ENCODE measurements at regions of chr14 and their contacts with region 1.

Region 1: GRCh38 chr14:59132796-59133494 is 55.5 kb upstream of the DAAM1 start:
- DNase-seq: no peak
- H3K4me3 ChIP-seq: no peak overlapping the region
- H3K27ac ChIP-seq: no peak overlapping the region
- H3K4me1 ChIP-seq: no peaks in the 10 kb centered on the region
- H3K27me3 ChIP-seq: no peaks in the 10 kb centered on the region
- CTCF ChIP-seq: no peak
- EP300 ChIP-seq: no peak
- POLR2A ChIP-seq: no peak

Region 2: GRCh38 chr14:58844544-58844943 is 288.4 kb before region 1 on chr14:
- intact Hi-C with region 1: no loop called
- DNase-seq: no peak
- H3K4me3 ChIP-seq: no peak overlapping the region
- H3K27ac ChIP-seq: no peak overlapping the region
- H3K4me1 ChIP-seq: peaks cover 3% of the 10 kb centered on the region
- H3K27me3 ChIP-seq: no peaks in the 10 kb centered on the region
- CTCF ChIP-seq: no peak
- EP300 ChIP-seq: no peak
- POLR2A ChIP-seq: no peak

Region 3: DNA sequence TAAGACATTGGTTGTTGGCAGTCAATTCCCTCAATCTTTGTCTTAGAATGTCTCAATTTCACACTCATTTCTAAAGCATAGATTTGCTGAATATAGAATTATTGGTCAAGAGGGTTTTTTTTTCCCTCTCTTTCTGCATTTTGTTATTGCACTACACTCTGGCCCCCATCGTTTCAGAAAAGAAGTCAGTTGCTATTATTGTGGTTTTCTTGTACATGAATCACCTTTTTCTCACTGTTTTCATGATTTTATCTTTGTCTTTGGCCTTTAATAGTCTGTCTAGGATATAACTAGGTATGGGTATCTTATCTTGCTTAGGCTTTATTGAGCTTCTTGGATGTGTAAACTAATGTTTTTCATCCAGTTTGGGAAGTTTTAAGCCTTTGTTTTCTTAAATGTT is 138.8 kb before region 1 on chr14:
- intact Hi-C with region 1: no loop called
- DNase-seq: no peak
- H3K4me3 ChIP-seq: no peak overlapping the region
- H3K27ac ChIP-seq: no peak overlapping the region
- H3K4me1 ChIP-seq: no peaks in the 10 kb centered on the region
- H3K27me3 ChIP-seq: no peaks in the 10 kb centered on the region
- CTCF ChIP-seq: no peak
- EP300 ChIP-seq: no peak
- POLR2A ChIP-seq: no peak

Region 4: DNA sequence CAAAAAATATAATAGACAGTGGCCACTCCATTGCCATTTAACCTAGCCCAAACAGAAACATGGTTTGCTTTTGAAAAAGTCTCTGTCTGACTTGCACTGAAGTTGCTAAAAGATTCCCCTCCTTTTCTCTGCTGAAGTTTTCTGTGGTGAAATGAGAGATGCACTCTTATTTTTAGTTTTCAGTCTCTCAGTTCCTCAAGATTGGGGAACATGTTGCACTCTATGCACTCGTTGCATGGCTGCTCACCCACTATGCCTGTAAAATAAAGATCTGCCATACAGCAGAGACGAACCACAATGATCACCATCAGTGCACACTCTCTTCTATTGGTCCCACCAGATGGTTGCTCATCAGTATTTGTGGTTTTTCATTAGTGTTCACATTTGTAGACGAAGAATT is 42.5 kb after region 1 on chr14:
- intact Hi-C with region 1: no loop called
- DNase-seq: no peak
- H3K4me3 ChIP-seq: no peak overlapping the region
- H3K27ac ChIP-seq: no peak overlapping the region
- H3K4me1 ChIP-seq: no peaks in the 10 kb centered on the region
- H3K27me3 ChIP-seq: no peaks in the 10 kb centered on the region
- CTCF ChIP-seq: no peak
- EP300 ChIP-seq: no peak
- POLR2A ChIP-seq: no peak

Region 5: DNA sequence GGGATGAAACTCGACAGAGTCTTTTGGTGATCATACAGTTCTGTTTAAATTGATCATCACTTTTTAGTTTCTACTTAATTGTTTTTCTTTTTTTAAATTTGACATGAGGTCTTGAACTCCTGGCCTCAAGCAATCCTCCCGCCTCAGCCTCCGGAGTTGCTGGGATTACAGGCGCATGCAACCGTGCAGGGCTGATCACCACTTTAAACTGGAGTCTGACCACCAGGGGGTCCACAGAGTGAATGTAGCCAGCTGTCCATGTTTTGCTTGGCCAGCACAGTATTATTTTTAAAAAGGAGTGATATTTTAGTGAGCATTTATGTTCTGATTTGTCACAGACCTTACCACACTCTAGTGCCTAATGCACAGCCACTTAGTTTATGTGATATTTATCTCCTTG is 66.3 kb after region 1 on chr14:
- intact Hi-C with region 1: loop called in 1 of 4 experiments (anchors 5 kb)
- DNase-seq: no peak
- H3K4me3 ChIP-seq: no peak overlapping the region
- H3K27ac ChIP-seq: no peak overlapping the region
- H3K4me1 ChIP-seq: peaks cover 21% of the 10 kb centered on the region
- H3K27me3 ChIP-seq: no peaks in the 10 kb centered on the region
- CTCF ChIP-seq: no peak
- EP300 ChIP-seq: no peak
- POLR2A ChIP-seq: no peak

Measured in ovary (tissue), 10 donors.